ENCODE measurements at regions of chr20 and their contacts with region 1.

Region 1: GRCh38 chr20:9978397-9979004 is 56.3 kb upstream of the ANKEF1 start:
- DNase-seq: peak; percentile 34 to 77 (median 58)
- H3K4me3 ChIP-seq: no peak overlapping the region
- H3K27ac ChIP-seq: no peak overlapping the region
- H3K4me1 ChIP-seq: peaks cover 0 to 7% of the 10 kb centered on the region in 2 donors
- H3K27me3 ChIP-seq: no peaks in the 10 kb centered on the region
- CTCF ChIP-seq: peak; percentile 38 to 93 (median 86)
- POLR2A ChIP-seq: no peak

Region 2: DNA sequence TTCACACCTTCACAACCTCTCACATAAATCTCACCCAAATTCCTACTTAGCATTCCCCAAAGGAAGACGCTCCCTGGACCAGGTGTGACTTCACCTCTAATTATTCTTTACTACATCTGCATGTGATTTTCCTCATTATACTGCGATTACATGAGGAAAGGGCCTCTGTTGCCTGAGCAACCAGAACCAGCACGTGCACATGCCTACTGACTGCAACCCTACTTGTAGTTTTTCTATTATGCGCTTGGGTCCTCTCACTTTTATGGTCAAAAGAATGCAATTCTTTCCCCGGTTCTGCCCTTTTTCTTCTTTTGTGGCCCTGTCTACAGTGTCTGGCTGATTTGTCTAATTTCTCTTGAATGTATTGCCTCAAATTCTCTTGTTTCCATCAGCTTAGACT is 35.9 kb after region 1 on chr20:
- intact Hi-C with region 1: no loop called
- DNase-seq: no peak
- H3K4me3 ChIP-seq: no peak overlapping the region
- H3K27ac ChIP-seq: no peak overlapping the region
- H3K4me1 ChIP-seq: no peaks in the 10 kb centered on the region
- H3K27me3 ChIP-seq: no peaks in the 10 kb centered on the region
- CTCF ChIP-seq: no peak
- POLR2A ChIP-seq: no peak

Region 3: DNA sequence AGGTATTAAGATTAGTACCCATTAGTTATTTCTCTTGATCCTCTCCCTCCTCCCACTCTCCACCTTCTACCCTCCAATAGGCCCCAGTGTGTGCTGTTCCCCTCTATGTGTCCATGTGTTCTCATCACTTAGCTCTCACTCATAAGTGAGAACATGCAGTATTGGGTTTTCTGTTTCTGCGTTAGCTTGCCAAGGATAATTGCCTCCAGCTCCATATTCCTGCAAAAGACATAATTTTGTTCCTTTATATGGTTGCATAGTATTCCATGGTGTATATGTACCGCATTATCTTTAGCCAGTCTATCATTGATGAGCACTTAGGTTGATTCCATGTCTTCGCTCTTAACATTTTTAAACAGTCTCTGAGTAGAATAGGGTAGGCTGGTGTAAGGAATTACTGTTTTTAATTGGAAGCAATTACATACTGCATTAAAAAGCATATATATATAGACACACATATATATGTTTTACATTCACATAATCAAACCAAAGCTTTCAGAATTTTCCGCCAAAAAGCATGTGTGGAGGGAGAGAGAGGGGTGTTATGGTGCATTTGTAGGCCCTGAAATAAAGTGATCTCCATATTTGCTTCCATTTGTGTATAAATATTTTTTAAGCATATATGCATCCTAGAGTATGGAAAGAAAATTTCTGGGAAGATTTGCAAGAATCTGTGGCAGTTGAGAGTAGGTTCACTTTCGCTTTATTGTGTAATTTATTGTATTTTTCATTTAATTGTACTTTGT is 55.6 kb after region 1 on chr20:
- intact Hi-C with region 1: no loop called
- DNase-seq: no peak
- H3K4me3 ChIP-seq: peak overlapping the region in 1 of 4 donors; percentile 74
- H3K27ac ChIP-seq: no peak overlapping the region
- H3K4me1 ChIP-seq: peaks cover 0 to 5% of the 10 kb centered on the region in 2 donors
- H3K27me3 ChIP-seq: no peaks in the 10 kb centered on the region
- CTCF ChIP-seq: no peak
- POLR2A ChIP-seq: no peak

Region 4: GRCh38 chr20:10090588-10091166 is 112.2 kb after region 1 on chr20:
- intact Hi-C with region 1: loop called (anchors 5 kb)
- DNase-seq: peak; percentile 39 to 73 (median 53)
- H3K4me3 ChIP-seq: no peak overlapping the region
- H3K27ac ChIP-seq: no peak overlapping the region
- H3K4me1 ChIP-seq: peaks cover 0 to 11% of the 10 kb centered on the region in 2 donors
- H3K27me3 ChIP-seq: no peaks in the 10 kb centered on the region
- CTCF ChIP-seq: peak; percentile 57 to 84 (median 76)
- POLR2A ChIP-seq: no peak

Region 5: GRCh38 chr20:10271494-10272219 is 293.2 kb after region 1 on chr20:
- intact Hi-C with region 1: no loop called
- DNase-seq: no peak
- H3K4me3 ChIP-seq: no peak overlapping the region
- H3K27ac ChIP-seq: no peak overlapping the region
- H3K4me1 ChIP-seq: no peaks in the 10 kb centered on the region
- H3K27me3 ChIP-seq: no peaks in the 10 kb centered on the region
- CTCF ChIP-seq: no peak
- POLR2A ChIP-seq: no peak

Region 6: GRCh38 chr20:10427060-10427692 is 448.7 kb after region 1 on chr20:
- intact Hi-C with region 1: loop called (anchors 2 to 10 kb)
- DNase-seq: peak; percentile 27 to 84 (median 60)
- H3K4me3 ChIP-seq: no peak overlapping the region
- H3K27ac ChIP-seq: no peak overlapping the region
- H3K4me1 ChIP-seq: peaks cover 14 to 39% of the 10 kb centered on the region in 2 donors
- H3K27me3 ChIP-seq: no peaks in the 10 kb centered on the region
- CTCF ChIP-seq: peak; percentile 59 to 85 (median 78)
- POLR2A ChIP-seq: no peak

Region 7: GRCh38 chr20:10434467-10434831 is 455.9 kb after region 1 on chr20:
- intact Hi-C with region 1: loop called (anchors 2 to 10 kb)
- DNase-seq: peak; percentile 93 to 99 (median 96)
- H3K4me3 ChIP-seq: peak overlapping the region in 2 of 4 donors; percentile 78 to 86
- H3K27ac ChIP-seq: peak overlapping the region; percentile 82 to 93 (median 91)
- H3K4me1 ChIP-seq: peaks cover 16 to 35% of the 10 kb centered on the region in 2 donors
- H3K27me3 ChIP-seq: no peaks in the 10 kb centered on the region
- CTCF ChIP-seq: no peak
- POLR2A ChIP-seq: peak; percentile 98 to 99

Region 8: GRCh38 chr20:11544029-11544678 is 1565.7 kb after region 1 on chr20:
- intact Hi-C with region 1: loop called in 1 of 2 experiments (anchors 10 kb)
- DNase-seq: peak in 4 of 7 donors; percentile 29 to 53 (median 42)
- H3K4me3 ChIP-seq: no peak overlapping the region
- H3K27ac ChIP-seq: no peak overlapping the region
- H3K4me1 ChIP-seq: peaks cover 0 to 4% of the 10 kb centered on the region in 2 donors
- H3K27me3 ChIP-seq: no peaks in the 10 kb centered on the region
- CTCF ChIP-seq: peak; percentile 44 to 70 (median 62)
- POLR2A ChIP-seq: no peak

Measured in adrenal gland (tissue), 19 donors.